ENCODE measurements at regions of chr13 and their contacts with region 1.

Region 1: DNA sequence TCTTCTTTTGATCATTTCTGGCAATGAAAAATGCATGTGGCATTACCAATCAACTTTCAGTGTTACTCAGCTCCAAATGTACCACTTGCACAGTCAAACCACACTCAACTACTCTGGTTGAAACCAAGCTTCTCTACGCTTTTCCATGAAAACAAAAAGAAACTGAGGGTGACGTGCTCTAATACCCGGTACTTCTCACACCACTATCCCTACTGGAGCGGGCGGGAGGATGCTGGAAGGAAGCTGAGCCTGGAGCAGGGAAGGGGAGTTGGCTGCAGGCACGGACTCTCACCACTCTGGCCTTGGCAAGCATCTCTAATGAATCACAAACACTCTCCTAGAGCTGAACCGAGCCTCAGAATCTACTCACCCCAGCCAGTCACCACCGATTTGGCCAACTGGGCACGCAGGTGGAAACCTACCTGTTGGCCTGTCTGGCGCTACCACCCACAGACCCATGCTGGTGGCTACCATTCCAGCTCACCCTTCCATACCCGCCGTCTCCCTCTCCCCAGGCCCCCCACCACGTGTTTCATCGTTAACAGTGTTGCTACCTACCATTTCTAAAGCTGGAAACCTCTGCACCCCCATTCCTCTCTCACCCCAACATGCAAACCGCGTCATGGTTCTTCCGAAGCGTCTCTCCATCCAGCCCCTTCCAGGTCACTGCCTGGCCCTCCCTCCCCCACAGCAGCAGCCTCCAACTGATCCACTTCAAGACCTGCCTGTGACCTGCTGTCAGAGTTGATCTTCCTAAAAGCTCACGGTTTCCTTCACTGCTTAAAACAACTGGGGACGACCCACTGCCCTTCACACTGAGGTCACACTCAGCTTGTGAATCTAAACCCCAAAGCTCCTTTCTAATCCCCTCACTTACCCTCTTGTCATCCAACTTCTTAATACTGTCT is 48.0 kb downstream of the STK24 start:
- DNase-seq: peak; percentile 55
- ATAC-seq: peak; percentile 80
- H3K4me3 Mint-ChIP-seq: peak overlapping the region; percentile 29
- H3K27ac Mint-ChIP-seq: peak overlapping the region; percentile 87
- H3K4me1 Mint-ChIP-seq: peaks cover 93% of the 10 kb centered on the region
- H3K27me3 Mint-ChIP-seq: no peaks in the 10 kb centered on the region

Region 2: DNA sequence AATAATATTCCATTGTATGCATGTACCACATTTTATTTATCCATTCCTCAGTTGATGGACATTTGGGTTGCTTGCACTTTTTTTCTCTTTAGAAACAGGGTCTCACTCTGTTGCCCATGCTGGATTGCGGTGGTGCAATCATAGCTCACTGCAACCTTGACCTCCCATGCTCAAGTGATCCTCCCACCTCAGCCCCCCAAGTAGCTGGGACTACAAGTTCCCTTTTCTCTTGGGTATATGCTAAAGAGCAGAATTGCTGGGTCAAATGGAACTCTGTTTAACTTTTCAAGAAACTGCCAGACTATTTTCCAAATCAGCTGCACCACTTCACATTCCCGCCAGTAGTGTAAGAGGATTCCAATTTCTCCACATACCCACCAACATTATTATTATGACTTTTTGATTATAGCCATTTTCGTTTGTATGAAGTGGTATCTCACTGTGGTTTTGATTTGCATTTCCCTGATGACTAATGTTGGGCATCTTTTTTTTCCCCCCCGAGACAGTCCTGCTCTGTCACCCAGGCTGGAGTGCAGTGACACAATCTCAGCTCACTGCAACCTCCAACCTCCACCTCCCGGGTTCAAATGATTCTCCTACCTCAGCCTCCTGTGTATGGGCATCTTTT is 583.0 kb before region 1 on chr13:
- CTCF ChIA-PET with region 1: no interaction called
- POLR2A ChIA-PET with region 1: no interaction called
- intact Hi-C with region 1: no loop called
- DNase-seq: no peak
- ATAC-seq: peak; percentile 57
- H3K4me3 Mint-ChIP-seq: no peak overlapping the region
- H3K27ac Mint-ChIP-seq: no peak overlapping the region
- H3K4me1 Mint-ChIP-seq: no peaks in the 10 kb centered on the region
- H3K27me3 Mint-ChIP-seq: peaks cover 7% of the 10 kb centered on the region

Region 3: GRCh38 chr13:98927951-98928927 is 399.3 kb after region 1 on chr13:
- CTCF ChIA-PET with region 1: no interaction called
- POLR2A ChIA-PET with region 1: no interaction called
- intact Hi-C with region 1: no loop called
- DNase-seq: no peak
- ATAC-seq: no peak
- H3K4me3 Mint-ChIP-seq: no peak overlapping the region
- H3K27ac Mint-ChIP-seq: no peak overlapping the region
- H3K4me1 Mint-ChIP-seq: peaks cover 12% of the 10 kb centered on the region
- H3K27me3 Mint-ChIP-seq: no peaks in the 10 kb centered on the region

Region 4: DNA sequence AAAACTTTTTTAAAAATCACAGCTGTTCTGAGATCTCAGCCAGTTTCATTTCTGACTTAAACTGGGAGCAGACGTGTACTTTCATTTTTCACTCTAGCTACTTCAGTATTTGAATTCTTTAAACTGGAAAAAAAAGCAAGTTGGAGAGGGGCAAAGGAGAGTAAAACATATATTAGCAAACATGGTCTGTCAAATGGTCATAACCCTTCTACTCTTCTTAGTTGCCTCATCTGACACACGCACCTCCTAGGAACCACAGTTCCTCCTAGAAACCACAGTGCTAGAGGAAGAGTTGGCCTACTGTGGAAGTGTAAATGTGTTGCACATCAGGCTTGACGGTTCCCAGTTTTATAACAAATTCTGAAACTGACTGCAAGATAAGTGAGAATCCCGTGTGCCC is 1019.5 kb after region 1 on chr13:
- CTCF ChIA-PET with region 1: no interaction called
- POLR2A ChIA-PET with region 1: no interaction called
- intact Hi-C with region 1: loop called in 1 of 2 experiments (anchors 5 kb)
- DNase-seq: no peak
- ATAC-seq: peak; percentile 82
- H3K4me3 Mint-ChIP-seq: no peak overlapping the region
- H3K27ac Mint-ChIP-seq: no peak overlapping the region
- H3K4me1 Mint-ChIP-seq: peaks cover 34% of the 10 kb centered on the region
- H3K27me3 Mint-ChIP-seq: no peaks in the 10 kb centered on the region